AG04449 (cell line): ENCODE measurements at regions of chr7 and their contacts with region 1.

Region 1: DNA sequence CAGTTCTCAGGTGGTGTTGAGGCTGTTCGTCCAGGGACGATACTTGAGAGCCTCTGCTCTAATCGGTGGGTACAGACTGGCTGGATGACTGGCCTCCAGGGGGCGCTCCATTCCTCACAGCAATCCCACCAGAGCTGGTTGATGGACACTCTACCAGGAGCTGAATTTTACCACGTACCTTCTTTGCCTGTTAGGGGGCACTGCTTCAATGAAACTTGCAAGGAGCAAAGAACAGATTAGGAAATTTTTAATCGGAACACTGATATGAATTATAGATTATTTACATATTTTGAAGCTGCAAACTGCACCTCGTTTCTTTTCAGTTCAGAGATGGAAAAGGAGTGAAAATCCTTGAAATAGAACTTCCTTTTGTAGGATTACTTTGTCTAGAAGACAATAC is 44.9 kb downstream of the KBTBD2 start:
- DNase-seq: no peak
- H3K4me3 ChIP-seq: no peak overlapping the region
- CTCF ChIP-seq: peak; percentile 75

Region 2: GRCh38 chr7:32670110-32671025 is 176.3 kb before region 1 on chr7:
- CTCF ChIA-PET with region 1: no interaction called
- POLR2A ChIA-PET with region 1: no interaction called
- DNase-seq: no peak
- H3K4me3 ChIP-seq: no peak overlapping the region
- CTCF ChIP-seq: no peak

Region 3: DNA sequence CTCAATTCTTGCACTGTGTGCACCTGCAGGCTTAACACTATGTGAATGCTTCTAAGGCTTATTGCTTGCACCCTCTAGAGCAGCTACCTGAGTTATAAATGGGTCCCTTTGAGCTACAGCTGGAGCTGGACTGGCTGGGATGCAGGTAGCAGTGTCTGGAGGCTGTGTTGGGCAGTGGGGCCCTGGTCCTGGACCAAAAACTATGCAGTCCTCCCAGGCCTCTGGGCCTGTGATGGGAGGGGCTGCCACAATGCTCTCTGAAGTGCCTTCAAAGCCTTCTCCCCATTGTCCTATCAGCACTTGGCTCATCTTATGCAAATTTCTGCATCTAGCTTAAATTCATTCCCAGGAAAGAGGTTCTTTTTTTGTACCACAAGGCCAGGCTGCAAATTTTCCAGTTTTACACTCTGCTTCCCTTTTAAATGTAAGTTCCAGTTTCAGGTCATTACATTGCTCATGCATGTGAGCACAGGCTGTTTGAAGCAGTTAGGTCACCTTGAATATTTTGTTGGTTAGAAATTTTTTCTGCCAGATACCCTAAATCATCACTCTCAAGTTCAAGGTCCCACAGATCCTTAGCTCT is 18.8 kb after region 1 on chr7:
- CTCF ChIA-PET with region 1: interaction called, 30 read pairs
- POLR2A ChIA-PET with region 1: no interaction called
- DNase-seq: no peak
- H3K4me3 ChIP-seq: no peak overlapping the region
- CTCF ChIP-seq: no peak

Region 4: GRCh38 chr7:32879460-32879859 is 32.8 kb after region 1 on chr7:
- CTCF ChIA-PET with region 1: interaction called, 16 read pairs
- POLR2A ChIA-PET with region 1: no interaction called
- DNase-seq: no peak
- H3K4me3 ChIP-seq: no peak overlapping the region
- CTCF ChIP-seq: no peak

Region 5: DNA sequence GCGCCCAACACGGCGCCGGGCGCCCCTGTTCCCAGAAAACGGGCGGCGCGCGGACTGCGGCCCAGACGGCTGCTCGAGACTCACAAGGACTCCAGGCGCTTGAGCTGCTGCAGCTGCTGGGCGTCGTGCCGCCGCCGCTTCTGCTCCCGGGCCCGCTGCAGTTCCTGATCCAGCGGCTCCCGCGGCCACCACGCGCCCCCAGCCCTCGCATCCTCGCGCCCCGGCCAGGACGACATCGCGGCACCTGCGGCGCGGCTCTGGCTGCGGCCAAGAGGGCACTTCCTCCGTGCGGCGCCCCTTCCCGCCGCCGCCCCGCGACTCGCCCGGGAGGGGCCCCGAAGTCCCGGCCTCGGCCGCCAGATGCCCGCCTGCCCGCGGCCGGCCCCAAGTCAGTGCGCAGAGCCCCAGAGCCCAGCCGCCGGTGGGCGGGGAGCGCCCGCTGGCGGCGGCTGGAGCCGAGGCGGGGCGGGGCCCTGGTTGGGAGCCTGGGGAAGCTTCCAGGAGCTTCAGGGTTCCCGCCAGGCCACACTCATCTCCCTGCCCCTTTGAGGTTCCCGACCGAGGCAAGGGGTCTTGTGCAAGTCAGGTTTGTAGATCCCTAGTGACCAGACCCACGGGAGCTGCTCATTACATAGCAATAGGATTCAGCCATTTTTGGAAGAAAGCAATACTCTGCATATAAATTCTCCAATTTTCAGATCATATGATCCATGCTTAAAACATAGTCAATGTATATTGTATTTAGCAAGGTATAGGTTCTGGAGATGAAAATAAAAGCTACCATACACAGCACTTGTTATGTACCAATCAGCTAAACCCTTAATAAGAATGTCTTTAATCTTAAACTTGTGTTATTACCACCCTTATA is 96.3 kb after region 1 on chr7:
- CTCF ChIA-PET with region 1: interaction called, 19 read pairs
- POLR2A ChIA-PET with region 1: no interaction called
- DNase-seq: no peak
- H3K4me3 ChIP-seq: peak overlapping the region; percentile 78
- CTCF ChIP-seq: peak; percentile 69